Activated CD4-positive, alpha-beta memory T cell treated with anti-CD3 and anti-CD28 coated beads for 36 hours (primary cell): ENCODE measurements at regions of chr3 and their contacts with region 1.

Region 1: DNA sequence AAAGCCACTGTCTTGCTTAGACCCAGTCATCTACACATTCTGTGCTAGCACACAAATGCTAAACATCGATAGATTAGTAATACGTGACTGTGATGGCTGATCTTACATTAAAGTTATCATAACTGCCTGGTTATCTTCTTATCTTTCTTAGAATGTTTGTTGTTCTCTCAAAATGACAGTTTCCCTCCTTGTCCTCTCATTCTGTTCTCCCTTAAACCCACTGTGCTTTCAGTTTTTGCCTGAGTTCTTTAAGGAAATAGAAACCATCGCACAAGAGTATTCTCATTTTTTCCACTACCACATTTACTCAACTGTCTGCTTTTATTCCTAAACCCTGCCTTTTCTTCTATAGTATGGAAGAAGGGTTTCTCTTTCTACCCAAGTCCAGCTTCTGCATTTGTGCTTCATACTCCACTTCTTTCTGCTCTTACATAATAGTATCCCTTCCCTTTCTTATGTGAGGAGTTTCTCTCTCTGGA is 17.1 kb downstream of the STX19 start:
- DNase-seq: no peak
- H3K4me3 Mint-ChIP-seq: no peak overlapping the region
- H3K27ac Mint-ChIP-seq: peak overlapping the region; percentile 69
- H3K4me1 Mint-ChIP-seq: peaks cover 38% of the 10 kb centered on the region
- H3K27me3 Mint-ChIP-seq: no peaks in the 10 kb centered on the region

Region 2: GRCh38 chr3:93973131-93974126 is 37.8 kb before region 1 on chr3 and contains the start of gene PROS1:
- CTCF ChIA-PET with region 1: interaction called, 4 read pairs
- POLR2A ChIA-PET with region 1: no interaction called
- intact Hi-C with region 1: loop called (anchors 1 kb)
- DNase-seq: peak; percentile 74
- H3K4me3 Mint-ChIP-seq: peak within 1 kb of the TSS; percentile 75
- H3K27ac Mint-ChIP-seq: peak within 1 kb of the TSS; percentile 70
- H3K4me1 Mint-ChIP-seq: peaks cover 10% of the 10 kb centered on the region
- H3K27me3 Mint-ChIP-seq: peaks cover 11% of the 10 kb centered on the region
- total RNA-seq, gene PROS1: 0.82 to 1.7 TPM

Region 3: DNA sequence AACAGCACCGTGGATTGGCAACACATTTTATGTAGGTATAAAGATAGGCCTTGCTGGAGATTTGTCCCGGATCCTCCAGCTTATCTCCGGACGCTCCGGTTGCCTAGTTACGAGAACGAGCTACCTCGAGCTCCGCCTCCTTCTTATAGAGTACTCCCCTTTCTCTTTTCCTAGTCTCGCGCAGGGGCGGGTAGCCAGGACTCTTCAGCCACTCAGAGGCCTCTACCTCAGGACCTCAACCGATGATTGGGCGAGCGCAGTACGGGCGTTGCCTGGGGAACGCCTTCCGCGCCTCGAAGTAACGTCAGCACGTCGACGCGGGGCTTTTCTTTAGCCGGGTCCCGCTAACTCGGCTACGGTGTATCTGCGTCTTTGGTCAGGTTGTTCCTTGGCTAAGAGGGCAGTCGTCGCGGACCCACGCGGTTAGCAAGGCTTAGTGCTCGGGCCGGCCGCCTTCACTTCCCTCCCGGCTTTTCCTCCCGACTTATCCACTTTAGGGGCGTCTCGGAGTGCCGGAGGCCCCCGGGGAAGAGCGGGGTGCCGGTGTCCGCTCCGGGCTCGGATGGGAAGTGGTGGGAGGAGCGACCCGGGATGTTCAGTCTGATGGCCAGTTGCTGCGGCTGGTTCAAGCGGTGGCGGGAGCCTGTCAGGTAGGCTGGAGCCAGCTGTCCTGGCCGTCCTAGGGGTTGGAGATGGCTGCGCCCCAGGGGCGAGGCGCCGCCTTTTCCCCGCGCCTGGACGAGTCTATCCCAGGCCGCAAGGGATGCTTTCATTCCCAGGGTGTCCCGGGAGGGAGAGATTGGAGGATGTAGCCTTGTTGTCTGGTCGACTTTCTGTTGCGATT is 31.2 kb before region 1 on chr3 and contains the start of gene ARL13B:
- CTCF ChIA-PET with region 1: no interaction called
- POLR2A ChIA-PET with region 1: no interaction called
- intact Hi-C with region 1: loop called (anchors 1 kb)
- DNase-seq: peak; percentile 96
- H3K4me3 Mint-ChIP-seq: peak within 1 kb of the TSS; percentile 82
- H3K27ac Mint-ChIP-seq: peak within 1 kb of the TSS; percentile 56
- H3K4me1 Mint-ChIP-seq: peaks cover 19% of the 10 kb centered on the region
- H3K27me3 Mint-ChIP-seq: no peaks in the 10 kb centered on the region
- total RNA-seq, gene ARL13B: 12.0 to 12.9 TPM

Region 4: GRCh38 chr3:94062431-94063404 is 51.4 kb after region 1 on chr3 and contains the starts of genes DHFR2 and NSUN3:
- CTCF ChIA-PET with region 1: interaction called, 12 read pairs
- POLR2A ChIA-PET with region 1: interaction called, 5 read pairs
- intact Hi-C with region 1: loop called (anchors 1 kb)
- DNase-seq: peak; percentile 89
- H3K4me3 Mint-ChIP-seq: peak within 1 kb of the TSS; percentile 96
- H3K27ac Mint-ChIP-seq: peak within 1 kb of the TSS; percentile 99
- H3K4me1 Mint-ChIP-seq: peaks cover 52% of the 10 kb centered on the region
- H3K27me3 Mint-ChIP-seq: no peaks in the 10 kb centered on the region
- total RNA-seq, gene DHFR2: 6.8 to 9.7 TPM
- total RNA-seq, gene NSUN3: 15.3 to 16.2 TPM

Region 5: GRCh38 chr3:94069194-94069813 is 58.0 kb after region 1 on chr3:
- CTCF ChIA-PET with region 1: interaction called, 12 read pairs
- POLR2A ChIA-PET with region 1: no interaction called
- intact Hi-C with region 1: loop called (anchors 1 kb)
- DNase-seq: no peak
- H3K4me3 Mint-ChIP-seq: no peak overlapping the region
- H3K27ac Mint-ChIP-seq: no peak overlapping the region
- H3K4me1 Mint-ChIP-seq: peaks cover 75% of the 10 kb centered on the region
- H3K27me3 Mint-ChIP-seq: no peaks in the 10 kb centered on the region